ENCODE measurements at regions of chr1 and their contacts with region 1.

Region 1: DNA sequence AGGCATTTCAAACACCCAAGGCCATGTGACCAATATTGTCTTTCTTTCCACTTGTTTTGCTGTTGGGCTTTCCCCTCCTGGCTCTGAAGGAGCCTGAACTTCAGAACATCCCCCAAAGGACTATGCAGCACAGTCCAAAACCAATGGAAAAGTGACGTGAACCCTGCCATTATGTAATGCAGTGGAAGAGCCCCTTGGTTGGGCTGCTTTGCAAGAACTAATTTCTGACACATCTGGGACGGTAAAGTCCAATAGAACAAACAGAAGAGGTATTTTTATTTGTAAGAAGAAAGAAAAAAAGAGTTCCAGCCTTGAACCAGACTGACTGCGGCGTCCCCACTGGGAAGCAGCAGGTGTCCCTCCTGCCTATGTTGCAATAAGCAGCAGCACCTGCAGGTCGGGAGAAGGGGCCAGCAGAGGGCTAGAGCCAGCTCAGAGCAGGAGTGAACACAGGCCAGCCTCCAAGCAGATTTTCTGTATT is 116.7 kb downstream of the CDC7 start:
- DNase-seq: peak; percentile 68 to 71
- H3K4me3 ChIP-seq: no peak overlapping the region
- H3K4me3 Mint-ChIP-seq: no peak overlapping the region
- H3K27ac Mint-ChIP-seq: no peak overlapping the region
- H3K4me1 ChIP-seq: peaks cover 25% of the 10 kb centered on the region
- H3K4me1 Mint-ChIP-seq: peaks cover 12% of the 10 kb centered on the region
- H3K27me3 ChIP-seq: no peaks in the 10 kb centered on the region
- H3K27me3 Mint-ChIP-seq: no peaks in the 10 kb centered on the region
- CTCF ChIP-seq: peak in 1 of 2 experiments; percentile 60

Region 2: GRCh38 chr1:91673613-91674012 is 56.3 kb after region 1 on chr1:
- CTCF ChIA-PET with region 1: no interaction called
- POLR2A ChIA-PET with region 1: no interaction called
- intact Hi-C with region 1: no loop called
- DNase-seq: no peak
- H3K4me3 ChIP-seq: no peak overlapping the region
- H3K4me3 Mint-ChIP-seq: no peak overlapping the region
- H3K27ac Mint-ChIP-seq: no peak overlapping the region
- H3K4me1 ChIP-seq: no peaks in the 10 kb centered on the region
- H3K4me1 Mint-ChIP-seq: peaks cover 6% of the 10 kb centered on the region
- H3K27me3 ChIP-seq: no peaks in the 10 kb centered on the region
- H3K27me3 Mint-ChIP-seq: no peaks in the 10 kb centered on the region
- CTCF ChIP-seq: no peak

Region 3: GRCh38 chr1:91795591-91796389 is 178.5 kb after region 1 on chr1:
- CTCF ChIA-PET with region 1: no interaction called
- POLR2A ChIA-PET with region 1: no interaction called
- intact Hi-C with region 1: loop called (anchors 10 kb)
- DNase-seq: no peak
- H3K4me3 ChIP-seq: no peak overlapping the region
- H3K4me3 Mint-ChIP-seq: no peak overlapping the region
- H3K27ac Mint-ChIP-seq: no peak overlapping the region
- H3K4me1 ChIP-seq: 0 out of 2 replicates have a peak, but pooled peaks cover 5% of the 10 kb centered on the region
- H3K4me1 Mint-ChIP-seq: peaks cover 6% of the 10 kb centered on the region
- H3K27me3 ChIP-seq: no peaks in the 10 kb centered on the region
- H3K27me3 Mint-ChIP-seq: no peaks in the 10 kb centered on the region
- CTCF ChIP-seq: no peak

Region 4: GRCh38 chr1:91827087-91827458 is 209.7 kb after region 1 on chr1:
- CTCF ChIA-PET with region 1: no interaction called
- POLR2A ChIA-PET with region 1: no interaction called
- intact Hi-C with region 1: loop called (anchors 10 kb)
- DNase-seq: peak in 1 of 2 experiments; percentile 30
- H3K4me3 ChIP-seq: no peak overlapping the region
- H3K4me3 Mint-ChIP-seq: no peak overlapping the region
- H3K27ac Mint-ChIP-seq: peak overlapping the region; percentile 48
- H3K4me1 ChIP-seq: peaks cover 15% of the 10 kb centered on the region
- H3K4me1 Mint-ChIP-seq: no peaks in the 10 kb centered on the region
- H3K27me3 ChIP-seq: no peaks in the 10 kb centered on the region
- H3K27me3 Mint-ChIP-seq: no peaks in the 10 kb centered on the region
- CTCF ChIP-seq: no peak

Region 5: GRCh38 chr1:91885716-91886506 is 268.6 kb after region 1 on chr1 and contains the start of gene TGFBR3:
- CTCF ChIA-PET with region 1: no interaction called
- POLR2A ChIA-PET with region 1: no interaction called
- intact Hi-C with region 1: loop called (anchors 10 kb)
- DNase-seq: peak; percentile 77 to 83
- H3K4me3 ChIP-seq: peak within 1 kb of the TSS; percentile 83
- H3K4me3 Mint-ChIP-seq: peak within 1 kb of the TSS; percentile 83
- H3K27ac Mint-ChIP-seq: peak within 1 kb of the TSS; percentile 13
- H3K4me1 ChIP-seq: no peaks in the 10 kb centered on the region
- H3K4me1 Mint-ChIP-seq: peaks cover 7% of the 10 kb centered on the region
- H3K27me3 ChIP-seq: no peaks in the 10 kb centered on the region
- H3K27me3 Mint-ChIP-seq: no peaks in the 10 kb centered on the region
- CTCF ChIP-seq: peak; percentile 14 to 22
- total RNA-seq, gene TGFBR3: 12.2 and 15.2 TPM in 2 replicates

Region 6: GRCh38 chr1:91924146-91924545 is 306.8 kb after region 1 on chr1:
- CTCF ChIA-PET with region 1: no interaction called
- POLR2A ChIA-PET with region 1: no interaction called
- intact Hi-C with region 1: loop called (anchors 2 kb)
- DNase-seq: no peak
- H3K4me3 ChIP-seq: no peak overlapping the region
- H3K4me3 Mint-ChIP-seq: no peak overlapping the region
- H3K27ac Mint-ChIP-seq: no peak overlapping the region
- H3K4me1 ChIP-seq: no peaks in the 10 kb centered on the region
- H3K4me1 Mint-ChIP-seq: peaks cover 3% of the 10 kb centered on the region
- H3K27me3 ChIP-seq: no peaks in the 10 kb centered on the region
- H3K27me3 Mint-ChIP-seq: no peaks in the 10 kb centered on the region
- CTCF ChIP-seq: no peak

Measured in Caco-2 (cell line).